Activated T-helper 2 cell treated with anti-CD3 and anti-CD28 coated beads, Interferon-gamma antibody, Interleukin-2, Interleukin-4, amounts not matched to agents 10 μg/mL and 5 μg/mL and 100 μg/mL, durations not matched to agents 14 hours and 24 hours and 36 hours (primary cell): ENCODE measurements at regions of chr6 and their contacts with region 1.

Region 1: DNA sequence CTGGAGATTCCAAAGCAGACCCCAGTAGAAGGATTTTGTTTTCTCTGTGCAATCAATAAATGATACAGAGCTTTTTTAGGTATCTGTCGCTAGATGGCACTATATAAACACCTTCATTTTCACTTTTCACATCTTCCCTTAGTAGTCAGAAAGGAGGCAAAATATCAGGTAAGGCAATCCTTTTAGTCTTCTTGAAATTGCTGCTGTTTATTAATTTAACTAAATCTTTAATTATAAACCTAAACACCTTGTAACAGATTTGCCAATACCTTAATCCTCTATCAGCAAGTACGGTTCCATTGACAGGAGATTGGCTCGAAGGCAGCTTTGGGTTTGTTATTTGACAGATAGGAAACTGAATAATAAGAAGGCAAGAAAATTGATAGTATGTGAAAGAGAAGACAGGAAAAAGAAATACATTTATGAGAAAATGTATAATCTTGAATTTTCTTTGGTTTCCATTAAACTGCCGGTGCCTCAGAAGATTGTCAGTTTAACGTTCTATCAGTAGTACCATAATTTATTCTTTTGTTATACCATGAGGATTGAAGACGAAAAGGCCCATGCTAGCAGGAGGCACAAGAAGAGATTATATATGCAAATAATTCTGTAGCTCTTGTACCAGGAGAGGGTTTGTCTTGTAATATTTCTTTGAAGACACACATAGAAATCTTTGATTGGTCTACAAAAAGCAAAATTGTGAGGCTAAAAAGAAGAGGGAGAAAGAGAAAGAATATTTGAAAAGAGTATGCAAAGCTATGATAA is 23.5 kb upstream of the IBTK start:
- DNase-seq: no peak
- H3K4me3 Mint-ChIP-seq: no peak overlapping the region
- H3K27ac Mint-ChIP-seq: no peak overlapping the region
- H3K4me1 Mint-ChIP-seq: no peaks in the 10 kb centered on the region
- H3K27me3 Mint-ChIP-seq: peaks cover 3% of the 10 kb centered on the region

Region 2: DNA sequence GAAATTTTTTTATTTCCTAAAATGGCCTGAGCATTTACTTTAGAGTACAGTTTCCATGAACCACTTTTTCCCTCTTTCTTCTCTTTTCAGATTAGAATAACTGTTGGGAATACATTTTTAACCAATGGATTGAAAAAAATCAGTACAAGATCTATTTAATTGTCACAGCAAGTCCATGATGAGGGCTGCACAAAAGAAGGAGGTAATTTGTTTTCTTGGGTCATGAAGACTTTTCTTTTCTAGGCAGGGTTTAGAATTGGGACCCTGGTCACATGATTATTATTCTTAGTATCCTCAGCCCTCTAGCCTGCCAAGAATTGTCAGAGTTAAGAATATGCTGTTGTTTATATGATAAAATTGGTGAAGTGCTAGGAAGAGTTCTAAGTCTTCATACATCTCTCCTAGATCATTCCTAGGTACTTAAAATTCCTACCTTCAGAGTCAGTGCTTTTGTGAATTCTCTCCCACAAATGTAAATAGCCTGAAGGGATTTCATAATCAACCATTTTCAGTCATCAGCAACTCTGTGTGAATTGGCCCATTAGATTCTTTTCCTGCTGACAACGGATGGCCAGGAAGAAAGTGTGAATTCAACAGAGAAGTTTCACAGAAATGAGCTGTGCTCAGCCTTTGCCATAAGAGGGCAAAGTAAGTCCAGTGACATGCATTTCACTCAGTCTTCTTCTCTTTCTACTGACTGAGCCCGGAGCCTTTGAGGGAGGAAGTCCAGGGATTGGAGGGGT is 60.1 kb after region 1 on chr6:
- intact Hi-C with region 1: no loop called
- DNase-seq: no peak
- H3K4me3 Mint-ChIP-seq: no peak overlapping the region
- H3K27ac Mint-ChIP-seq: no peak overlapping the region
- H3K4me1 Mint-ChIP-seq: peaks cover 2% of the 10 kb centered on the region
- H3K27me3 Mint-ChIP-seq: peaks cover 3% of the 10 kb centered on the region

Region 3: DNA sequence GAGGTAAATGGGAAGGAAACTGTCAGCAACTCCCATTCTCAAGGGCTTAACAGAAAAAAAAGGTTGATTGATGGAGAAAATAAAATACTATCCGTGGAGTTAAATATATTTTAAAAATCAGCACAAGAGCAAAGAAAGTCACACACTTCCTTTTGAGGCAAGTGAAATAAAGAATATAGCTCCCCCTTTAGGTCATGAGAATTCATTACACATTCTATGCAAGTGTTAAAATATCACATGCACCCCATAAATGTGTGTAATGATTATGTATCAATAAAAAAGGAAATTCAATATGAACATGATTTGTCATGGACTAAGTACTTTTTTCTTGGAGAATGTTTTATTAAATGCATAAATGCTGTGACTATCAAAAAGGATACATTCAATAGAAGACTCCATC is 441.8 kb after region 1 on chr6:
- intact Hi-C with region 1: loop called (anchors 2 kb)
- DNase-seq: no peak
- H3K4me3 Mint-ChIP-seq: no peak overlapping the region
- H3K27ac Mint-ChIP-seq: no peak overlapping the region
- H3K4me1 Mint-ChIP-seq: no peaks in the 10 kb centered on the region
- H3K27me3 Mint-ChIP-seq: no peaks in the 10 kb centered on the region

Region 4: DNA sequence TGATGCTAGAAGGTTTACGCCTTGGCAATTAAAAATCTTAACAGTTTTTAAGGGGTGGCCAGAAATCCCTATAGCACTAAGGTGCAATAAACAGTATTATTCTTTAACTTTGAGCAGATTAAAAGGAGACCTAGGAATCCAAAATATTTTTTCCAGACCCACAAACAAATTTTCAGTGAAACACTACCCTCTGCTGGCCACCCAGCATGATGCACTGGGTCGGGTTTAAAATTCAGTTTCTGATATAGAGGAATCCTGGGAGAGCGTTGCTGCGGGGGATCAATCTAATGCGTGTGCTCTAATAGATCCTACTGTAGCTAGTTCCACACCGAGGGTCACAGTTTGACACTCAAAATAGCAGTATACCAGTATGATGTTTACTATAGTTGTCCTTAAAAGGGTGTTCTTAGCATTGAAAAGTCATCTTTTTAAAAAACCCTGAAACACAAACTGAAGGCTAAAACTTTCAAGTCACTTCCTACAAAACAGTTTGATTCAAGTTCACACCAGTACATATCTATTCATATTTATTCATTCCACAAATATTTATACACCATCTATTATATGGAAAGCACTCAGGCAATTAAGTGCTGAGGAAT is 784.4 kb after region 1 on chr6:
- intact Hi-C with region 1: loop called (anchors 1 kb)
- DNase-seq: no peak
- H3K4me3 Mint-ChIP-seq: no peak overlapping the region
- H3K27ac Mint-ChIP-seq: no peak overlapping the region
- H3K4me1 Mint-ChIP-seq: peaks cover 4% of the 10 kb centered on the region
- H3K27me3 Mint-ChIP-seq: no peaks in the 10 kb centered on the region